ENCODE measurements at regions of chr7 and their contacts with region 1.

Region 1: GRCh38 chr7:46719616-46720015 is 798.5 kb upstream of the IGFBP3 start:
- DNase-seq: no peak
- H3K4me3 ChIP-seq: no peak overlapping the region
- H3K27ac ChIP-seq: no peak overlapping the region
- H3K4me1 ChIP-seq: no peaks in the 10 kb centered on the region
- CTCF ChIP-seq: no peak

Region 2: DNA sequence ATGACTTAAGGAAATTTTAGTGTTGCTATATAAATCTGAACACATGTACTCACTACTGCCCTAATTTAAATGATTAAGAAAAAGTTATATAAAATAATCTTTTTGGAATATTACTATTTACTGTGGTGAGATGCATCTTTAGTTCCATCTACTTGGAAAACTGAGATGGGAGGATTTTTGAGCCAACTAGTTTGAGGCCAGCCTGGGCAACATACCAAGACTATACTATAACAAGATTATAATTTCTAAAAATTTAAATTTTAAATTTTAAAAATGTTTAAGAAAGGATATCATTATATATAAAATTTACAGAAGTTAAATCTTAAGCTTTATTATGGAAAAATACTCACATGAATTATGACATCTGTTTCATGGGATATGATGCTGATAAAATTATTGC is 267.8 kb before region 1 on chr7:
- CTCF ChIA-PET with region 1: no interaction called
- POLR2A ChIA-PET with region 1: interaction called, 12 read pairs
- intact Hi-C with region 1: no loop called
- DNase-seq: no peak
- H3K4me3 ChIP-seq: no peak overlapping the region
- H3K27ac ChIP-seq: no peak overlapping the region
- H3K4me1 ChIP-seq: no peaks in the 10 kb centered on the region
- CTCF ChIP-seq: no peak

Region 3: DNA sequence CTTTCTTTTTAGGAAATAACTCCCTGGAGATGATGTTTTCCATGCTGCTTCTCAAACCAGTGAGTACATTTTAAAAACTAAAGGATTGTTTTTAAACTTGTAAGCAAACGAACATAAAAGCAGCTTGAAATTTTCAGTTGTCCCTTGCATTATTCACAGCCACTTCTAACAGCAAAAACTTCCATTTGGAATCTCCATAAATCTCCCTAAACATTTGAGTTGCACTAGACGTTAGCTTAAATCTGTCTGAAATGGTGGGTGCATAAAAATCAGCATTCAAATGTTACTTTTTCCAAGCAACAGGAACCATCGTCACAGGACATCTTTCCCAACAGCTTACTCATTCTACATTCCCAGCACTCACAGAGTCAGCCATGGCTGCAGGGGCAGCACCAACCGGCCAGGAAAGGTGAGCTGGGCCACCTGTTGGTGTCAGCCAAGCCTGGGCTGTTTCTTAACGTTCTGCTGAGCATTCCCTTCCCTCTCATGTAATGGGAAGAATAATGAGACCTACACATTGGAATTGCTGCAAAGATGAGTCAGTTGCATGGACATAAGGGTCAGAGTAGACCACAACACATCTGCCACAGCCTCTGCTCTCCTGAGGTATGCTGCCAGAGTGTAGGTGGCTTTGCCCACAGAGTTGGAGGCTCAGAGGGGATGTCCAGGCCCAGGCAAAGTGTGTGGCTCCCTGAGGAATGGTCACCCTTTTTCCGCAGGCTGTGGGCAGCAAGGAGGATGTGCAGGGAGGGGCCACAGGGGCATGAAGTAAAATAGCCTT is 699.2 kb after region 1 on chr7:
- CTCF ChIA-PET with region 1: no interaction called
- POLR2A ChIA-PET with region 1: no interaction called
- intact Hi-C with region 1: no loop called
- DNase-seq: no peak
- H3K4me3 ChIP-seq: no peak overlapping the region
- H3K27ac ChIP-seq: no peak overlapping the region
- H3K4me1 ChIP-seq: no peaks in the 10 kb centered on the region
- CTCF ChIP-seq: no peak

Measured in OCI-LY7 (cell line).